Activated T-helper 2 cell treated with anti-CD3 and anti-CD28 coated beads, Interferon-gamma antibody, Interleukin-2, Interleukin-4, amounts not matched to agents 10 μg/mL and 5 μg/mL and 100 μg/mL, durations not matched to agents 14 hours and 24 hours and 36 hours (primary cell): ENCODE measurements at regions of chr12 and their contacts with region 1.

Region 1: GRCh38 chr12:22334410-22335290 is at the start of gene ST8SIA1:
- DNase-seq: no peak
- H3K4me3 Mint-ChIP-seq: peak within 1 kb of the TSS; percentile 83
- H3K27ac Mint-ChIP-seq: no peak within 1 kb of the TSS
- H3K4me1 Mint-ChIP-seq: peaks cover 11% of the 10 kb centered on the region
- H3K27me3 Mint-ChIP-seq: peaks cover 57% of the 10 kb centered on the region
- total RNA-seq, gene ST8SIA1: 0.39 and 1.3 TPM in 2 replicates

Region 2: GRCh38 chr12:21697904-21698630 is 636.6 kb before region 1 on chr12:
- intact Hi-C with region 1: loop called (anchors 5 kb)
- DNase-seq: no peak
- H3K4me3 Mint-ChIP-seq: no peak overlapping the region
- H3K27ac Mint-ChIP-seq: no peak overlapping the region
- H3K4me1 Mint-ChIP-seq: peaks cover 6% of the 10 kb centered on the region
- H3K27me3 Mint-ChIP-seq: peaks cover 5% of the 10 kb centered on the region

Region 3: DNA sequence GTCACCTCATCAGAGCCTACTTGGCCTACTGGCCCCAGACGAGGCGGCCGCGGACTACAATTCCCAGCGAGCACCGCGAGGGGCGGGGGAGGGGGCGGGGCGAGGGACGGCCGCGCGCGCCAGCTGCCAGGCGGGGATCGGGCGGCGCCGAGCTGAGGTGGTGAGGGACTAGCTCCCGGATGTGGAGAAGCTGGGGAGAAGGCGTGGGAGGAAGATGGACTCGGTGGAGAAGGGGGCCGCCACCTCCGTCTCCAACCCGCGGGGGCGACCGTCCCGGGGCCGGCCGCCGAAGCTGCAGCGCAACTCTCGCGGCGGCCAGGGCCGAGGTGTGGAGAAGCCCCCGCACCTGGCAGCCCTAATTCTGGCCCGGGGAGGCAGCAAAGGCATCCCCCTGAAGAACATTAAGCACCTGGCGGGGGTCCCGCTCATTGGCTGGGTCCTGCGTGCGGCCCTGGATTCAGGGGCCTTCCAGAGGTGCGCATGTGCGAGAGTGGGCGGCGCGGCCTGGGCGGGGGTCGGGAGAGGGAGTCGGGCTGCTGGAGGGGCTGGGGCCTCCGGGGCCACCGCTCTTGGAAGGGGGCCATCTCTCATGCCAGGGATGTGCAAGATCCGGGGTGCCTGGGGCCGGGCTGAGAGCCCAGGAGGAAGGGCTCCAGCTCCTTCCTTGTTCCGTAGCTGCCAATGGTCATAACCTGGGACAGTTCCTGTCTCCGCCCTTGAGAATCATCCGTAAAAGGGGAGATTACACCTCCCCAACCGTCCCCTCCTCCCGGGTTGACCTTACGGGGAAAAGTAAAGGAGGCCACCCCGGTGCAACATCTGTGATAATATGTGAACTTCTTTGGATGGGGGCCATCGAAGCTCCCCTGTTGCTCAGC is 288.3 kb before region 1 on chr12 and contains the start of gene CMAS:
- intact Hi-C with region 1: loop called (anchors 2 kb)
- DNase-seq: peak; percentile 64
- H3K4me3 Mint-ChIP-seq: peak within 1 kb of the TSS; percentile 95
- H3K27ac Mint-ChIP-seq: peak within 1 kb of the TSS; percentile 87
- H3K4me1 Mint-ChIP-seq: peaks cover 45% of the 10 kb centered on the region
- H3K27me3 Mint-ChIP-seq: no peaks in the 10 kb centered on the region
- total RNA-seq, gene CMAS: 36.2 and 37.7 TPM in 2 replicates

Region 4: GRCh38 chr12:22100958-22101748 is 233.5 kb before region 1 on chr12:
- intact Hi-C with region 1: loop called (anchors 2 kb)
- DNase-seq: no peak
- H3K4me3 Mint-ChIP-seq: no peak overlapping the region
- H3K27ac Mint-ChIP-seq: no peak overlapping the region
- H3K4me1 Mint-ChIP-seq: peaks cover 2% of the 10 kb centered on the region
- H3K27me3 Mint-ChIP-seq: peaks cover 9% of the 10 kb centered on the region

Region 5: DNA sequence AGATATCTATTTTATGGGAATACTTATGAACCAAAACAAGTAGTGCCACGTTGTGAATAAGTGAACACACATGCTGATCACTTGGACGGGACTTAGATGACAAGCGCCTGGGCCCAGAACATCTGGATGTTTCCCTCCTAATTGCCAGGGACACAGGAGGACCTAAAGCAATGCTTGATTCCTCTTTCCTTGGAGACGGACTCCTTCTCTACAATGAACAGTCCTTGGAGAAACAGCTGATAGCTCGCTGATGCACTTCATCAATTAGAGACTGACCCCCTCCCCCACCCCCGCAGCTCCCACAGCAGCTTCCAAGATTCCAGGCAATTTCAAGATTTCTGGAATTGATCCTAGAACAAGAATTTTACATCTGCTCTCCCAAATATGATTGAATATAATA is 86.5 kb before region 1 on chr12:
- intact Hi-C with region 1: no loop called
- DNase-seq: no peak
- H3K4me3 Mint-ChIP-seq: no peak overlapping the region
- H3K27ac Mint-ChIP-seq: no peak overlapping the region
- H3K4me1 Mint-ChIP-seq: no peaks in the 10 kb centered on the region
- H3K27me3 Mint-ChIP-seq: peaks cover 2% of the 10 kb centered on the region

Region 6: GRCh38 chr12:22396253-22396652 is 61.6 kb after region 1 on chr12:
- intact Hi-C with region 1: loop called (anchors 5 kb)
- DNase-seq: no peak
- H3K4me3 Mint-ChIP-seq: peak overlapping the region; percentile 24
- H3K27ac Mint-ChIP-seq: peak overlapping the region; percentile 35
- H3K4me1 Mint-ChIP-seq: peaks cover 23% of the 10 kb centered on the region
- H3K27me3 Mint-ChIP-seq: no peaks in the 10 kb centered on the region

Region 7: DNA sequence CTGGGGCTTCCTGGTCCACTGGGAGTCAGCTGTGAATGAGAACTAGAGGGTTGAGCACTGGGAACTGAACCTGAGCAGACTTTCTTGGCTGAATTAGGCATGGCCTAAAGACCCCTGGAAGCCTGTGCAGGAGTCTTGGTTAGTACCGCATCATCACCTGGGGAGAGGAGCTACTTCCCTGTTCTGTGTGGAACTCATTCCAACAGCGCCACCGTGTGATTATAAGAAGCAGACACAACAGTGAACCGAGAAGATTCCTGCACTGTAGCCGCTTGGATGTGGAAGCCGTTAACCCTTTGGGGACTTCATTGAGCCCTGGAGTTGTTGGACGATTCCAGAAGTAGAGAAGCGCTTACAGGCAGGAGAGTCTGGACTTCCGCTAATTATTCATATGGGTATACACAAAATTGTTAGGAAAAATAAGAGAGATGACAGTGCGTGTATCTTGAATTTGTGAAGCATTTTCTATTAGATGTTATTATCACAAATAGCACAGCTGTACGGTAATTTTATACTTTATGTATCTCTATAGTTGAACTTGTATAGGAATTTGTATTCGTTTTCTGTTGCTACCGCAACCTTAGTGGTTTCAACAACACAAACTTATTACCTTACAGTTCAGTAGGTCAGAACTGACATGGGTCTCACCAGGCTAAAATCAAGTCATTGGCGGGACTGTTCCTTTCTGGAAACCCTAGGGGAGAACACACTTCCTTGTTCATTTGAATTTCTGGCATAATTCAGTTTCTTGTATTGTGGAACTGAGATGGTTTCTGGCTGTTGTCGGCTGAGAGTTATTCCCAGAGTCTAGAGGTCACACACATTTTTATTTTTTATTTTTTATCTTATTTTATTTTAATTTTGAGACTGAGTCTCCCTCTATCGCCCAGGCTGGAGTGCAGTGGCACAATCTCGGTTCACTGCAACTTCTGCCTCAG is 109.0 kb after region 1 on chr12:
- intact Hi-C with region 1: loop called (anchors 5 kb)
- DNase-seq: peak; percentile 40
- H3K4me3 Mint-ChIP-seq: no peak overlapping the region
- H3K27ac Mint-ChIP-seq: no peak overlapping the region
- H3K4me1 Mint-ChIP-seq: peaks cover 6% of the 10 kb centered on the region
- H3K27me3 Mint-ChIP-seq: peaks cover 16% of the 10 kb centered on the region